Endothelial cell of umbilical vein (primary cell): ENCODE measurements at regions of chr11 and their contacts with region 1.

Region 1: DNA sequence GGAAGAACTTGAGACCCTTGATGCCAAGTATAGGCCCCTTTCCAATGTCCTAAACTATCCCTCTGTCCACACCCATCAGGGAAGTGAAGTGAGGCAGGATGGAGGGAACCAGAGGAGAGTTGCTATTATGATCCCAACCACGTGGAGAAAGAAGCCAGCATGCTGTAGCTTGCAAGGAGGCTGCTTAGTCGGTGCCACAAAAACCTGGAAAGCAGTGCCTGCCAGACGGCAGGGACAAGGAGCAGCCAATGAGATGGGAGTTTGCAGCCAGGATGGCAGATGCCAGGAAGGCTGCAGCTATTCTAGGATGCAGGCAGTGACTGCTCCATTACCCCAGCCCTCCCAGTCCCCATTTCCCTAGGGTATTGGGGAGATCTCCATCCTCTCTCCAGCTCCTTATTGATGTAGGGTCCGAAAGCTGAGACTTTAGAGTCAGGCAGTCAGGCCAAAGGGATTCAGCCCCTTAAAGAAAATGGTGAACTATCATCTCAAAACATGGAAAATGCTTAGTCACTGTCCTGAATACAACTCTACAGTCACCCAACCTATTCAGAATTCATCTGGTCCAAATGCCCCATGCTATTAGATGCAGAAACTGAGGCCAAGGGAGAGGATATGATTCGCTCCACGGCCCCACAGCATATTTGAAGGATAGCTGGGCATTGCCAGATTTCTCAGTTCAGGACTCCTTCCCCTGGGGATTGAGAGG is 18.4 kb upstream of the LRRC55 start:
- DNase-seq: no peak
- H3K4me3 ChIP-seq: no peak overlapping the region
- H3K27ac ChIP-seq: no peak overlapping the region
- H3K4me1 ChIP-seq: no peaks in the 10 kb centered on the region
- H3K27me3 ChIP-seq: peaks cover 0 to 4% of the 10 kb centered on the region in 2 experiments
- CTCF ChIP-seq: no peak
- POLR2A ChIP-seq: no peak

Region 2: GRCh38 chr11:57124917-57125316 is 38.4 kb before region 1 on chr11:
- CTCF ChIA-PET with region 1: no interaction called
- POLR2A ChIA-PET with region 1: no interaction called
- dilution Hi-C with region 1: no loop called
- intact Hi-C with region 1: loop called (anchors 5 kb)
- DNase-seq: peak; percentile 17
- H3K4me3 ChIP-seq: no peak overlapping the region
- H3K27ac ChIP-seq: no peak overlapping the region
- H3K4me1 ChIP-seq: peaks cover 4% of the 10 kb centered on the region
- H3K27me3 ChIP-seq: peaks cover 2 to 8% of the 10 kb centered on the region in 2 experiments
- CTCF ChIP-seq: no peak
- POLR2A ChIP-seq: no peak

Region 3: DNA sequence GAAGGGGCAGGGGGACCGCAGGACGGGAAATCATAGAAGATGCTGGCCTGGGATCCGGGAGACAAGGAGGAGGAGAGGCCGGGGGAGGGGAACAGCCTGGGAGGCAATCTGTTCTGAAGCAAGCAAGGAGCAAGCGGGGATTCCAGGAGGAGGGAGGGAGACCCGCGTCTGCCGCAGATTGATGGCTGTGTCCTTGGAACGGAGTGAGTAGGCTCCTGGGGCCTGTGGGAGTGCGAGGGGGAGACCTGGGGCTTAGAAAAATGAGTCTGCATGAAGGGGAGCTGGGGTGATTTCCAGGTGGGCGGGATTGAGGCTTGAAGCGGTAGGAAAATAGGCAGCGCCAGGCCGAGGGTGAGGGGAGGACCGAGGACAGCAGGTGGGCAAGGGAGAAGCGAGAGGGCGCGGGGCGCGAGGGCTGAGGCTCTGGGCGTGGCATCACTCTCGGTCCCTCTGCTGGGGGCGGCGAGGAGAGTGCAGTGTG is 16.8 kb after region 1 on chr11:
- CTCF ChIA-PET with region 1: no interaction called
- POLR2A ChIA-PET with region 1: no interaction called
- dilution Hi-C with region 1: no loop called
- intact Hi-C with region 1: no loop called
- DNase-seq: no peak
- H3K4me3 ChIP-seq: no peak overlapping the region
- H3K27ac ChIP-seq: no peak overlapping the region
- H3K4me1 ChIP-seq: no peaks in the 10 kb centered on the region
- H3K27me3 ChIP-seq: no peaks in the 10 kb centered on the region
- CTCF ChIP-seq: no peak
- POLR2A ChIP-seq: no peak